BJ (cell line): ENCODE measurements at regions of chr1 and their contacts with region 1.

Region 1: DNA sequence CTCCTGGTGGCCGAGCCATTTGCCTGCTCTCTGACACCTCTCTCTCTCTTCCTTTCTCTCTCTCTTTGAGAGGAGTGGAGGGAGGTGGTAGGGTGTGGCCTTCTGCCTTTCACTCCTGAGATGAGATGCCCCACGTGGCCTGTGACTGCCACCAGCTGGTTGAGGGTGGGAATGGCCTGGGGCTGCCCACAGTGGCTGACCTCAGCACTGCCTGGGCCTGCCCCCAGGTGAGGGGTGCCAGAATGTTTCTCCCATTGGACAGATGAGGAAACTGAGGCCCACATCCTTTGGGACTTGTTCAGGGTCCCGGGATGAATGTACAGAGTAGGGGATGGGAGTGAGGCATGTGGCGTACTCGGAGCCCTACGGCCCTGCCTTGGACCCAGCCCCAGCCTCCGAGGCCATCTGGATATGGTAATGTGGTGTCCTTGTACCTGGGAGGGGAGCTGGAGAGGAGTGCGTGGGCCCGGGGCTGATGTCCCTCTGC is 12.7 kb upstream of the C1orf167 start:
- DNase-seq: no peak
- H3K4me3 ChIP-seq: no peak overlapping the region
- H3K27me3 ChIP-seq: no peaks in the 10 kb centered on the region
- CTCF ChIP-seq: peak; percentile 61

Region 2: GRCh38 chr1:11661103-11661502 is 88.1 kb before region 1 on chr1:
- CTCF ChIA-PET with region 1: interaction called, 10 read pairs
- POLR2A ChIA-PET with region 1: no interaction called
- DNase-seq: no peak
- H3K4me3 ChIP-seq: no peak overlapping the region
- H3K27me3 ChIP-seq: no peaks in the 10 kb centered on the region
- CTCF ChIP-seq: no peak

Region 3: DNA sequence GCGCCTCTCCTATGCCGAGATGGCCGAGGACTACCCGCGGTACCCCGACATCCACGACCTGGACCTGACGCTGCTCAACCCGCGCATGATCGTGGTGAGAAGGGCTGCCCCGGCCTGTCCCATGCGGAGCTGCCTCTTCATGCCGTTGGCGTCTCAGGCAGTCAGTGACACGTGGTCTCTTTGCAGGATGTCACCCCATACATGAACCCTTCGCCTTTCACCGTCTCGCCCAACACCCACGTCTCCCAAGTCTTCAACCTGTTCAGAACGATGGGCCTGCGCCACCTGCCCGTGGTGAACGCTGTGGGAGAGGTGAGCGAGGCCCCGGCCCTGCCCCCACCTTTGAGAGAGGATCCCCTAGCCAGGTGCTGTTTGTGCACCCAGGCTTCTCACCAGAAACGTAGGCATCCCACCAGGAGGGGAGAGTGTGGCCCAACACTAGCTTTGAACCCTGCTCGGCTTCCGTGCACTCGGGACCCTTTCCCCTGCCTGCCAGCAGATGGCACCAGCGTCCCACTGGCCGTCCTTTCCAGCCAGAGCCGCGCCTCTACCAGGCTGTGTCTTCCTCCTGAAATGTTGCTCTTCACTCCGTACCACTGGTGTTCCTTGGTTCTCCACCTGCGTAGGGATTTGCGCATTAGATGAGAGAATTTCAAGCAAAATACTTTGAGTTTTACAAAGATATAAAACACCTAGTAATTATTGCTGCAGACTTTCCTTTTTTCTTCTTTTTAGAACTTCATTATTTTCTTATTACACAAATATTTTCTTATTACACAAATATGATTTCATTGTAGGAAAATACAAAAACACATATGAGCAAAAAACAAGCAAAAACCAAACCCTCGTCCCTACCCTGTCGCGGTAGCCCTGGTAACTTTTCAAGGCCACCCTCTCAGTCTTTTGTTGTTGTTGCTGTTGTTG is 89.4 kb after region 1 on chr1:
- CTCF ChIA-PET with region 1: no interaction called
- POLR2A ChIA-PET with region 1: no interaction called
- DNase-seq: no peak
- H3K4me3 ChIP-seq: no peak overlapping the region
- H3K27me3 ChIP-seq: no peaks in the 10 kb centered on the region
- CTCF ChIP-seq: peak; percentile 100